A673 (cell line): ENCODE measurements at regions of chr11 and their contacts with region 1.

Region 1: GRCh38 chr11:12281571-12282478 is 95.5 kb upstream of the PARVA start:
- DNase-seq: peak; percentile 80
- H3K4me3 ChIP-seq: no peak overlapping the region
- H3K27ac ChIP-seq: no peak overlapping the region
- H3K4me1 ChIP-seq: no peaks in the 10 kb centered on the region
- H3K27me3 ChIP-seq: no peaks in the 10 kb centered on the region
- CTCF ChIP-seq: peak; percentile 88

Region 2: DNA sequence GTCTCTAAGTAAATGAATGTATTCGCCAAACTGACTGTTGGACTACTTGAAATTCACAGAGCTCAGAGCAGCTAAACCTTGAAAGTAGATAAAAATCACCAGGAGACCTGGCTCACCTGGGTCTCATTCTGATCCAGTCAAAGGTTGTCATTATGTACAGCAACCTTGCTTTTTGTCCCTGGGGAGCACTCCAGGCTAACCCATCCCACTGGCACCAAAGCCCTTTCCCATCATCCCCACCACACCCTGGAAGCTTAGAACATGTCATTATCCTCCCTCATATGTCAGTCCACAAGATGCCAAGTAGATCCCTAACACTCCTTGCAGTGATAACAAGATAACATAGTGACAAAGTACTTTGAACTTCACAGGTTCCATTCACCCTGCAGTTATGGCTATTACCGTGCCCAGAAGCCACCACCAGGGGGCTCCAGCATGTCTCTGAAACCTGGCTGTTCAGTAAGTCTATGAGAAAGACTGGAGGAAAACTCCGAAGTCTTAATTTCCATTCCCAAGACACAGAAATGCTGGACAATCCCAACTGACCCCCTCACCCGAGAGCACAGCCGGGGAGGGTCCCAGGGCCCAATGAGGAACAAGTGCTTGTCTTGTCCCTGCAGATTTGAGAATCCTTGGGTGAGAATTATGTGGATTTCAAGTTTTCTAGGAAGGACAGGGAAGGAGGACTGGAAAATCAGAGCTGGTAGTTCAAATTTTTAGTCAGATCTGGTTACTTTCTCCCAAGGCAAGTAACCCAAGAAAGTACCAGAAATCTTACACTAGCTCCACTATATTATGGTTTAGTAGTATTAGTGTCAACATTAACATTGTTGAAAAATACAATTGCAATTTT is 483.0 kb before region 1 on chr11:
- CTCF ChIA-PET with region 1: no interaction called
- POLR2A ChIA-PET with region 1: no interaction called
- intact Hi-C with region 1: loop called (anchors 5 kb)
- DNase-seq: peak; percentile 75
- H3K4me3 ChIP-seq: no peak overlapping the region
- H3K27ac ChIP-seq: no peak overlapping the region
- H3K4me1 ChIP-seq: no peaks in the 10 kb centered on the region
- H3K27me3 ChIP-seq: peaks cover 20% of the 10 kb centered on the region
- CTCF ChIP-seq: peak; percentile 89

Region 3: GRCh38 chr11:11931461-11932055 is 350.3 kb before region 1 on chr11:
- CTCF ChIA-PET with region 1: no interaction called
- POLR2A ChIA-PET with region 1: no interaction called
- intact Hi-C with region 1: loop called (anchors 10 kb)
- DNase-seq: peak; percentile 68
- H3K4me3 ChIP-seq: no peak overlapping the region
- H3K27ac ChIP-seq: no peak overlapping the region
- H3K4me1 ChIP-seq: no peaks in the 10 kb centered on the region
- H3K27me3 ChIP-seq: no peaks in the 10 kb centered on the region
- CTCF ChIP-seq: peak; percentile 71

Region 4: DNA sequence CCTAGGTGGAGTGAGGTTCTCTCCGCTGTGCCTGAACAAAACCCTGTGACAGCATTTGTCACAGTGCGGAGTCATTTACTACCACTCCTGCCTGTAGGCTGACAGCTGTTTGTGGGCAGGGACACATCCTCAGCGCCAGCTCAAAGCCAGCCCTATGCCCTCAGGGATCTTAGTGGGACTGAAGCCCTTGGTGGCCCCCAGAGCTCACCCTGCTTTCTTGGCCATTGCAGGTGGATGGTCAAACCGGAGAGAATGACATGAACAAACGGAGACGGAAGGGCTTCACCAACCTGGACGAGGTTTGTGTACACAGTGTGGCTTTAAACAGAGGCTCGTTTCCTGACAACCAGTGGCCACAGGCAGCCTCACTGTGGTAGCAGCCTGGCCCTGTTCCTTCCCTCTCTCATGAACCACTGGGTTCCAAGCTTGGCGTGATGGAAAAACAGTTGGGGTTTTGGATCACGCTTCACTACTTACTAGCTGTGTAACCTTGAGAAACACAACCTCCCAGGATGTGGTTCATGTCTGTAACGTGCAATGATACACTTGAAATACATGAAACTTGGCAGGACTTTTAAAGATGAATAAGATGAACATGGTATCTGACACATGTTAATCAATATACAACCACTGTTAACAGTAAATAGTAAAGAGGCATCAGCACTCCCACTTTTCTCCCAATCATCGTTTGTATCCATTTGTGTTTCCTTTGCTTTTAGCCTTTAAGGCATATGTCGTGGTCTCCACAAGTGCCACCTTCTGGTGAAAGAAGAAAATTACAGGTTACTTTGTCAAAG is 45.7 kb before region 1 on chr11:
- CTCF ChIA-PET with region 1: no interaction called
- POLR2A ChIA-PET with region 1: no interaction called
- intact Hi-C with region 1: loop called (anchors 5 kb)
- DNase-seq: peak; percentile 67
- H3K4me3 ChIP-seq: no peak overlapping the region
- H3K27ac ChIP-seq: no peak overlapping the region
- H3K4me1 ChIP-seq: no peaks in the 10 kb centered on the region
- H3K27me3 ChIP-seq: no peaks in the 10 kb centered on the region
- CTCF ChIP-seq: peak; percentile 61

Region 5: DNA sequence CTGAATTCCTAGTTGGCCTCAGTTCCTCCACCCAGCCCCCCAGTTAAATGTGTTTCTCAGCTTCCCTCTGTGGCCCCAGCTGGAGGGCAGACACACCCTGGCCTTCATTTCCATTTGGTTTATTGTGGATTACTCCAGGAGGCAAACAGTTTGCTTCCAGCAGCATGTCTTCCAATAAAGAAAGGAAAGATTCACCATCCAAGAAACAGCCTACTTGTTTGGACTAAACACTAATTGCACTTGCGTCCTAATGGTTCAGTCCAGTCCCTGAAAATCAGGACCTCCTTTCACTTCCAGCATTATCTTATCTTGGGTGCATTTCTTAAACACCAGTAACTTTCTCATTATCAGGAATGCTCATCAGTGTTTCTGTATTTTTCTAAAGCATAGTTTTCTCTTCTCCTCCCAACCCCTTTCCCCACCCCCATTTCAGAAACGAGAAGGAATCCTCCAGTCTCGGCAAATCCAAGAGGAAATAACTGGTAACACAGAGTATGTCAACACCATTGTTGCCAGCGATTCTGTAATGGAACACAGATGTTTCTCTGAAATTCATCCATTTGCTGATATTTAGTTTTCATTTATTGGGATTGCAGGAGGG is 226.4 kb after region 1 on chr11:
- CTCF ChIA-PET with region 1: no interaction called
- POLR2A ChIA-PET with region 1: no interaction called
- intact Hi-C with region 1: no loop called
- DNase-seq: peak; percentile 41
- H3K4me3 ChIP-seq: peak overlapping the region; percentile 1
- H3K27ac ChIP-seq: peak overlapping the region; percentile 27
- H3K4me1 ChIP-seq: peaks cover 3% of the 10 kb centered on the region
- H3K27me3 ChIP-seq: no peaks in the 10 kb centered on the region
- CTCF ChIP-seq: no peak

Region 6: DNA sequence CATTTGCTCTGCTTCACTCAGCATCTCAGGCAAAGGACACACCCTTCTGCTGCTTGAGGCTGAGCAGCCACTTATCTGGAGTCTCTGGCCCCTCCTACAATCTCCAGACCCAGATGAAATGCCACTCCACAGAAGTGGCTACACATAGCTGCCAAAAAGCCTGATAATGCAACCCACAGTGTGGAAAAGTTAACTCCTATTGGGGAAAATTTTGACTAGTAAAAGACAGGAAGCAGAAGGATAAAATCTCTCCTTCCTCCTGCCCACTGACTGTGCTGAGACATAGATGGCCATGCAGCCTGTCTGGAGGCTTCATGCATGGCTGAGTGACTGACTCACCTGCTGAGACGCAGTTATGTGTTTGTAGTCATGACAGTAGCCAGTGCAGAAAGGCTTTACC is 300.1 kb after region 1 on chr11:
- CTCF ChIA-PET with region 1: no interaction called
- POLR2A ChIA-PET with region 1: no interaction called
- intact Hi-C with region 1: no loop called
- DNase-seq: peak; percentile 47
- H3K4me3 ChIP-seq: no peak overlapping the region
- H3K27ac ChIP-seq: no peak overlapping the region
- H3K4me1 ChIP-seq: no peaks in the 10 kb centered on the region
- H3K27me3 ChIP-seq: no peaks in the 10 kb centered on the region
- CTCF ChIP-seq: no peak

Region 7: DNA sequence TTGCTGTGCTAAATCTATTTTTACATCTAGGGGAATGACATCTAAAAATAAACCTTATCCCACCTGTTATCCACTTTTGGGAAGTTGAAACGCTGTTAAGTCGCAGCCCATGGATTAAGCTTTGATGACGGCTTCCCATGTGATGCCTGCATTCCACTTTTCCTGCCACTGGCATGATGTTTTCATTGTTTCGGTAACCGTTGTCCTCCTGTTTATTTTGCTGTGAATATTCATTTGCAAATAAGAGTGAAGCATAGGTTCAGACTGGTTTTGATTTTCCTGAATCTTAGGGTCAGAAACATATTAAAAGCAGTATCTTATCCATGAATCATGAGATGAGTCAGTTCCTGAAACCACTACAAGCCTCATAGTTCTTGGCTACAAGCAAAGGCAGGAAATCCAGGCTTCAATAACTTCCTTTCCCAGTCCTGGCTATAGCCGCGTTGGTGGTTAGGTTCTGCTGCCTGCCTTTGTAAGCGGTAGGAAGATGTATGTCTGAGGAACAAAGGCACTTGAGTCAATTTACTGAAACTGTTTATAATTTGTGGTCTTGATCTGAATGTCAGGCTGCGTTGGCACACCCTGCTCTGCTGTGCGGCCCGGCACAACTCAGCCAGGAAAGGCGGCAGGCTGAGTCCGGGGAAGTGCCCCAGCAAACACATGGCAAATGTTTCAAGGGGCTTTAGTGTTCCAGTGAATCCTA is 411.8 kb after region 1 on chr11:
- CTCF ChIA-PET with region 1: no interaction called
- POLR2A ChIA-PET with region 1: no interaction called
- intact Hi-C with region 1: no loop called
- DNase-seq: peak; percentile 97
- H3K4me3 ChIP-seq: peak overlapping the region; percentile 23
- H3K27ac ChIP-seq: peak overlapping the region; percentile 85
- H3K4me1 ChIP-seq: peaks cover 77% of the 10 kb centered on the region
- H3K27me3 ChIP-seq: no peaks in the 10 kb centered on the region
- CTCF ChIP-seq: no peak